Naive thymus-derived CD4-positive, alpha-beta T cell (primary cell): ENCODE measurements at regions of chr3 and their contacts with region 1.

Region 1: GRCh38 chr3:186534113-186534669 is 10.0 kb downstream of the CRYGS start:
- DNase-seq: peak in 4 of 9 donors; percentile 25 to 61 (median 43)
- ATAC-seq: peak; percentile 92
- H3K4me3 ChIP-seq: no peak overlapping the region
- H3K4me3 Mint-ChIP-seq: peak overlapping the region in 6 of 10 donors; percentile 14 to 48 (median 35)
- H3K27ac ChIP-seq: no peak overlapping the region
- H3K27ac Mint-ChIP-seq: peak overlapping the region in 5 of 9 donors; percentile 10 to 87 (median 51)
- H3K4me1 ChIP-seq: peaks cover 14 to 22% of the 10 kb centered on the region in 2 donors
- H3K4me1 Mint-ChIP-seq: peaks cover 20 to 38% (median 34%) of the 10 kb centered on the region in 7 donors
- H3K27me3 ChIP-seq: no peaks in the 10 kb centered on the region
- H3K27me3 Mint-ChIP-seq: no peaks in the 10 kb centered on the region

Region 2: DNA sequence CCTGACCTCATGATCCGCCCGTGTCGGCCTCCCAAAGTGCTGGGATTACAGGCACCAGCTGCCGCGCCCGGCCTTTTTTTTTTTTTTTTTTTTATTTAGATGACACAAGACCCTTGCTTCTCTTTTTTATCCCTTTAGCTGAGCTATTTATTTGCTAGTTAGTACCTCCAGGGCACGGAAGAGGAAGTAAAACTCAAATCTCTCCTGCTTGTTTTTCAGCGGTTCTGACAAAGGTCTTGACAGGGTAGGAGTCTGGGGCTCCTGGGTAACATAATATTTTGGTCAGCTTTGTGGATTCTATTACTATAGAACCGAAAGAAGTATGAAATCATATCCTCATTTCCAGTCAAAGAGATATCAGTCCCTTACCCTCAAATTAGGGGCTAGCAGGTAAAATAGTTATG is 381.3 kb before region 1 on chr3:
- CTCF ChIA-PET with region 1: no interaction called
- POLR2A ChIA-PET with region 1: no interaction called
- intact Hi-C with region 1: loop called in 1 of 2 experiments (anchors 1 kb)
- DNase-seq: no peak
- ATAC-seq: peak; percentile 82
- H3K4me3 ChIP-seq: no peak overlapping the region
- H3K4me3 Mint-ChIP-seq: no peak overlapping the region
- H3K27ac ChIP-seq: no peak overlapping the region
- H3K27ac Mint-ChIP-seq: no peak overlapping the region
- H3K4me1 ChIP-seq: no peaks in the 10 kb centered on the region
- H3K4me1 Mint-ChIP-seq: peaks cover 7 to 15% (median 9%) of the 10 kb centered on the region in 7 donors
- H3K27me3 ChIP-seq: peaks cover 0 to 5% of the 10 kb centered on the region in 2 donors
- H3K27me3 Mint-ChIP-seq: peaks cover 24 to 60% (median 36%) of the 10 kb centered on the region in 5 donors

Region 3: DNA sequence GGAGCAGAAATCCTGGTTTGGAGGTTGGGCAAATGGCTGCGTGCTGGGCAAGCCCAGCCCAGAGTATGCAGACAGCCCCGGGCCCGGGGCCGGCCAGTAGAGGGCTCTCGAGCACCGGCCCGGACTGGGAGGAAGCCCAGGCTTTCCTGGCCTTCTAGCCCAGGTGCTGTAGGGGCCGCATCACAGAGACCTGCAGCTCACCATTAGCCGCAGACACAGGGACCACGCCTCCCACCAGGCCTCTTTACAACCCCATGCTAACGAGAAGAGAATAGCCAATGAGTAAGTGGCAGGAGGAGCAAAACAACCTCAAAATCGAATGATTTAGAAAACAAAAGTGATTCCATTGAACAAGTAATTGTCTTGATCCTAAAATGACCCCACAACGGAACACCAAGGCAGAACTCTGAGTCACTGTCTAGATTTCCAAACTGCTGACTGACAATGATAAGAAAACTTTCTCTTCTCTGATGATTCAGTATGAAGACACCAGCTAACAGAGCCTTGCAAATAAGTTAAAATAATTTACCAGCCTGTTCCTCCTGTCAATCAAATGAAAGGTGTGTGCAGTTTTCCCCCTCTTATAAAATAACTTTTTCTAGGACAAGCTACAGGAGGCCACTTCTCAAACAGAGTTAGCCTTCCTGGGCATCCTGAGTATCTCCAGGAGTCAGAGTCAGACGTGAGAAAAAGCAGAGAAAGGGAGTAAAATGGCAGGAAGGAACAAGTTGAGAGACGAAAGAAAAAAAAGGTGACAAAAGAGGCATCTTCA is 274.4 kb before region 1 on chr3:
- CTCF ChIA-PET with region 1: interaction called, 99 read pairs
- POLR2A ChIA-PET with region 1: no interaction called
- intact Hi-C with region 1: no loop called
- DNase-seq: peak; percentile 17 to 65 (median 43)
- ATAC-seq: peak; percentile 92
- H3K4me3 ChIP-seq: no peak overlapping the region
- H3K4me3 Mint-ChIP-seq: peak overlapping the region in 3 of 10 donors; percentile 23 to 41 (median 35)
- H3K27ac ChIP-seq: no peak overlapping the region
- H3K27ac Mint-ChIP-seq: peak overlapping the region in 8 of 9 donors; percentile 12 to 73 (median 32)
- H3K4me1 ChIP-seq: peaks cover 0 to 3% of the 10 kb centered on the region in 2 donors
- H3K4me1 Mint-ChIP-seq: peaks cover 13 to 23% (median 20%) of the 10 kb centered on the region in 7 donors
- H3K27me3 ChIP-seq: no peaks in the 10 kb centered on the region
- H3K27me3 Mint-ChIP-seq: no peaks in the 10 kb centered on the region

Region 4: GRCh38 chr3:186413615-186414415 is 120.4 kb before region 1 on chr3:
- CTCF ChIA-PET with region 1: no interaction called
- POLR2A ChIA-PET with region 1: no interaction called
- intact Hi-C with region 1: loop called in 1 of 2 experiments (anchors 10 kb)
- DNase-seq: peak in 3 of 9 donors; percentile 1 to 5 (median 3)
- ATAC-seq: peak; percentile 55
- H3K4me3 ChIP-seq: peak overlapping the region; percentile 47
- H3K4me3 Mint-ChIP-seq: peak overlapping the region; percentile 61 to 87 (median 74)
- H3K27ac ChIP-seq: no peak overlapping the region
- H3K27ac Mint-ChIP-seq: peak overlapping the region in 4 of 9 donors; percentile 10 to 46 (median 36)
- H3K4me1 ChIP-seq: peaks cover 0 to 13% of the 10 kb centered on the region in 2 donors
- H3K4me1 Mint-ChIP-seq: peaks cover 9 to 29% (median 20%) of the 10 kb centered on the region in 7 donors
- H3K27me3 ChIP-seq: no peaks in the 10 kb centered on the region
- H3K27me3 Mint-ChIP-seq: peaks cover 0 to 26% (median 7%) of the 10 kb centered on the region in 5 donors

Region 5: DNA sequence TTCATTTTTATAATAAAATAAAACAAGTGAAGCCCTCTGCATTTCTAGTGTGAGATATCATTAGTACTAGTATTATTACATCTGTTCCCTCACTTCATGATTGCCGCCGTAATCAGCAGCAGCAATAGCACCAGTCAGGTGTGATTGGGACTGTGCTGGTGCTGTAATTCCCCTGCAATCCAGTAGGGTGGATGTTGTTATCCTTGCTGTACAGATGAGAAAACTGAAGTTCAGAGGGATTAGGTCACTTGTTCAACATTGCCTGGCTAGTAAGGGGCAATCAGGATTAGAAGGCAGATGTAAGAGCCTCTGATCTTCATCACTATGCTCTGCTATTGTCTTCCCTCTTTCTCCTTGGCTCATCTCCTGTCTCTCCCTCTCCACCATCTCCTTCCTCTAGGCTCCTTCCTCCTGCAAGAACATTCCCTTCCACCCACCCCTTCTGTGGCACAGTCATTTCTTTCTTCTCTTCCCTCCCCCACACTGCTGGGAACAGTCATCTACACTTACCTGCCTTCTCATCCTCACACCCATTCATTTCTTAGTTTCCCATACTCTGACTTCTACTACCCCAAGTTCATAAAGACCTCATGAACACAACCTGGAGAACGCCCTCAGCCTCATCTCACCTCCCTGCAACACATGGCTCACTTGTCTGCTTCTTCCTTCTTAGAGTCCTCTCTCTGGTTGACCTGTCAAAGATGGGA is 19.7 kb before region 1 on chr3:
- CTCF ChIA-PET with region 1: interaction called, 19 read pairs
- POLR2A ChIA-PET with region 1: interaction called, 7 read pairs
- intact Hi-C with region 1: loop called (anchors 1 kb)
- DNase-seq: no peak
- ATAC-seq: no peak
- H3K4me3 ChIP-seq: no peak overlapping the region
- H3K4me3 Mint-ChIP-seq: peak overlapping the region in 7 of 10 donors; percentile 0 to 37 (median 7)
- H3K27ac ChIP-seq: no peak overlapping the region
- H3K27ac Mint-ChIP-seq: peak overlapping the region in 7 of 9 donors; percentile 3 to 72 (median 30)
- H3K4me1 ChIP-seq: peaks cover 48% of the 10 kb centered on the region in 2 donors
- H3K4me1 Mint-ChIP-seq: peaks cover 29 to 61% (median 48%) of the 10 kb centered on the region in 7 donors
- H3K27me3 ChIP-seq: no peaks in the 10 kb centered on the region
- H3K27me3 Mint-ChIP-seq: peaks cover 0 to 9% (median 0%) of the 10 kb centered on the region in 5 donors

Region 6: DNA sequence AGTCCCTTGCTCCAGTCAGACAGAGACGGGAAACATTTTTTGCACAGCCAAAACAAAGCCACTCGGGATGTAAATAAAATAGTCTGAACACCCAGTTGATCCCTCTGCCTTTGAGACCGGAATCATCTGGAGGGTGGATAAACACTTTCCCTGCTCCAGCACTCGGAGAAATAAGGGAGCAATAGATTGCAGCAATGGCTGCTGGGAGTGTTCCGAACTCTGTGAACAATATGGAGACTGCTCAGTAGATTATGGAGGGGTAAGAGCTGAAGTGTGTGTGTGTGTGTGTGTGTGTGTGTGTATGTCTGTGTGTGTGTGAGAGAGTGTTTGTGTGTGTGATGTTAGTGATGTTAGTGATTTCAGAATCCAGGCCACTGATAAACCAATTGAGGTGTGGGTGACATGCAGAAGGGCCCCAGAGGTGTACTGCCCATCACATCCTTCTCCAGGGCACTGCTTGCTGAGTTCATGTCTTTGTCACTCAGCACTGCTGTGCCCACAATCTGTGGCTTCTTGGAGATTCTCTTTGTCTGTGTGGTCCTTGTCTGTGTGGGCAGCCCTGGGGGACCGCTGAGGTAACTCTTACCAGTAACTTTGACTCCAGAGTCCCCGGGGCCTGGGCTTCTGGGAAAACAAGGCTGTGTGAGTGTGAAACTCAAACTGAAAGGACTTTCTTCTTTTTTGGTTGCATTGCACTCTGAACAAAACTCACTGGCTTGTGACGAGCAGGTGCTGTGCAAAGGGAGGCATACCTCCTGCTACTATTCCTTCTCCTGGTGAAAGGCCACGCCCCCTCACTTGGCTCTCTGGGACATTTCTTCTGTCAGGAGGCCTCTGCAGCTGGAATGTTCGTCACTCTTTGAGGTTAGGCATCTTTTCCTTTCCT is 13.0 kb before region 1 on chr3:
- CTCF ChIA-PET with region 1: interaction called, 19 read pairs
- POLR2A ChIA-PET with region 1: interaction called, 7 read pairs
- intact Hi-C with region 1: loop called (anchors 1 kb)
- DNase-seq: no peak
- ATAC-seq: no peak
- H3K4me3 ChIP-seq: no peak overlapping the region
- H3K4me3 Mint-ChIP-seq: peak overlapping the region in 1 of 10 donors; percentile 24
- H3K27ac ChIP-seq: no peak overlapping the region
- H3K27ac Mint-ChIP-seq: peak overlapping the region in 3 of 9 donors; percentile 3 to 31 (median 22)
- H3K4me1 ChIP-seq: peaks cover 35 to 36% of the 10 kb centered on the region in 2 donors
- H3K4me1 Mint-ChIP-seq: peaks cover 29 to 59% (median 44%) of the 10 kb centered on the region in 7 donors
- H3K27me3 ChIP-seq: no peaks in the 10 kb centered on the region
- H3K27me3 Mint-ChIP-seq: peaks cover 0 to 3% (median 0%) of the 10 kb centered on the region in 5 donors